IMR-90 (cell line): ENCODE measurements at regions of chr10 and their contacts with region 1.

Region 1: GRCh38 chr10:76036111-76036940 is 604.9 kb downstream of the LRMDA start:
- DNase-seq: peak; percentile 56
- ATAC-seq: peak; percentile 97
- H3K4me3 ChIP-seq: no peak overlapping the region
- H3K27ac ChIP-seq: no peak overlapping the region
- H3K4me1 ChIP-seq: no peaks in the 10 kb centered on the region
- H3K27me3 ChIP-seq: peaks cover 2% of the 10 kb centered on the region; the same call in 1 of the 2 replicates
- CTCF ChIP-seq: peak; percentile 83
- POLR2A ChIP-seq: no peak
- RAD21 ChIP-seq: peak; percentile 76

Region 2: DNA sequence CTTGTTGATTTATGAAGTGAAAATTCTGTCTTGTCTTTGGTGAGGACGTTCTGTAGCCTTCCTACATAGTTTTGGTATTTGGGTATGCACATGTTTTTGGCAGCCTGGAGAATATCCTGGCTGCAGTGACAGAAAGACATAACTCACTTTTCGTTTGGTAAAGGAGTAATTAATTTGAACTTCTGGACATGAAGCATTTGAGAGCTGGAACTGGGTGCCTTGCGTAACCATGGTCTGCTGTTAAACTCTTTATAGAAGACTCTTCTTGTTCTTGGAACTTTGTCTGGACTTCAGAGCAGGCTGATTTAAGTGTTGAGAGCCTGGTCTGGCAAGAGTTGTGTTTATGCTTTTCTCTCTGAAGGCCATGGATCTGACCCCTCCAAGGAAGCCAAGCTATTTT is 373.6 kb before region 1 on chr10:
- CTCF ChIA-PET with region 1: no interaction called
- POLR2A ChIA-PET with region 1: no interaction called
- dilution Hi-C with region 1: no loop called
- in situ Hi-C with region 1: no loop called
- intact Hi-C with region 1: no loop called
- DNase-seq: no peak
- ATAC-seq: no peak
- H3K4me3 ChIP-seq: no peak overlapping the region
- H3K27ac ChIP-seq: no peak overlapping the region
- H3K4me1 ChIP-seq: no peaks in the 10 kb centered on the region
- H3K27me3 ChIP-seq: peaks cover 5% of the 10 kb centered on the region
- CTCF ChIP-seq: no peak
- POLR2A ChIP-seq: no peak
- RAD21 ChIP-seq: no peak

Region 3: DNA sequence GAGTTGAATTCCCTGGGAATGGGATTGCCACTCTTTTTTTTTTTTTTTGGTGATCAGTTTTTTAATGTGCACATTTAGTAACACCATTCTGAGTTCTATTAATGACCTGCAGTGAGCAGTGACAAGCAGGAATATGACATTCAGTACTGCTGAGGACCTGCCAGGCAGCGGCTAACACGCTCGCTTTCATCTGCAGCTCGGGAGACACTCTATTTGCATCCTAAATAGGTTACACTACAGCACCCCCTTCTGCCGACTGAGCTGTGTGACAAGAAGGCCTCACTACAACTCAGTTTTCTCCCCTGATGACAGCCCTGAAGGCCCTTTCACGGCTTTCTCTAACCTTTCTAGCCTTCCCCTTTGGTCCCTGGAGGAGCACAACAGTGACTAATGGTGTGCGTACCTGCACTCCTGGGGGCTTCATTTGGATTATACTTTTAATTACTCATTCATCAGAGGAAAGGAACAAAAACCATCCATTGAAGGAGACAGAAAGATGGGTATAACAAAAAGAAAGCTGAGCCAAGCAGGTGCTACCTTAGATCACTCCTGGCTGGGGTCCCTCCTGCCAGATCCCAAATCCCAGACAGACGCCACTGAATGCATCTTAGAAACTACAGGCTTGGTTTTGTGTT is 267.5 kb after region 1 on chr10:
- CTCF ChIA-PET with region 1: interaction called, 3 read pairs
- POLR2A ChIA-PET with region 1: no interaction called
- dilution Hi-C with region 1: no loop called
- in situ Hi-C with region 1: no loop called
- intact Hi-C with region 1: loop called (anchors 1 kb)
- DNase-seq: peak; percentile 71
- ATAC-seq: peak; percentile 86
- H3K4me3 ChIP-seq: no peak overlapping the region
- H3K27ac ChIP-seq: no peak overlapping the region
- H3K4me1 ChIP-seq: peaks cover 9% of the 10 kb centered on the region
- H3K27me3 ChIP-seq: 0 out of 2 replicates have a peak, but pooled peaks cover 2% of the 10 kb centered on the region
- CTCF ChIP-seq: peak; percentile 55
- POLR2A ChIP-seq: no peak
- RAD21 ChIP-seq: peak; percentile 67

Region 4: GRCh38 chr10:76984559-76985443 is 948.5 kb after region 1 on chr10:
- CTCF ChIA-PET with region 1: no interaction called
- POLR2A ChIA-PET with region 1: no interaction called
- dilution Hi-C with region 1: no loop called
- in situ Hi-C with region 1: no loop called
- intact Hi-C with region 1: loop called (anchors 5 kb)
- DNase-seq: peak; percentile 79
- ATAC-seq: peak; percentile 85
- H3K4me3 ChIP-seq: no peak overlapping the region
- H3K27ac ChIP-seq: no peak overlapping the region
- H3K4me1 ChIP-seq: no peaks in the 10 kb centered on the region; the same call in 1 of the 2 replicates
- H3K27me3 ChIP-seq: peaks cover 3% of the 10 kb centered on the region; the same call in 1 of the 2 replicates
- CTCF ChIP-seq: peak; percentile 81
- POLR2A ChIP-seq: no peak
- RAD21 ChIP-seq: peak; percentile 72

Region 5: GRCh38 chr10:77111611-77112550 is 1075.6 kb after region 1 on chr10:
- CTCF ChIA-PET with region 1: no interaction called
- POLR2A ChIA-PET with region 1: no interaction called
- dilution Hi-C with region 1: no loop called
- in situ Hi-C with region 1: no loop called
- intact Hi-C with region 1: loop called (anchors 10 kb)
- DNase-seq: peak; percentile 87
- ATAC-seq: peak; percentile 90
- H3K4me3 ChIP-seq: no peak overlapping the region
- H3K27ac ChIP-seq: no peak overlapping the region
- H3K4me1 ChIP-seq: peaks cover 3% of the 10 kb centered on the region
- H3K27me3 ChIP-seq: no peaks in the 10 kb centered on the region
- CTCF ChIP-seq: peak; percentile 88
- POLR2A ChIP-seq: peak; percentile 38; the same call in 1 of the 2 replicates
- RAD21 ChIP-seq: peak; percentile 93